ENCODE measurements at regions of chr9 and their contacts with region 1.

Region 1: GRCh38 chr9:127166651-127167524 is 44.5 kb upstream of the ANGPTL2 start:
- DNase-seq: peak; percentile 81
- ATAC-seq: peak; percentile 97
- H3K4me3 Mint-ChIP-seq: peak overlapping the region; percentile 12
- H3K27ac Mint-ChIP-seq: peak overlapping the region; percentile 85
- H3K4me1 Mint-ChIP-seq: peaks cover 51% of the 10 kb centered on the region
- H3K27me3 Mint-ChIP-seq: no peaks in the 10 kb centered on the region
- CTCF ChIP-seq: no peak

Region 2: GRCh38 chr9:126722252-126723078 is 444.4 kb before region 1 on chr9:
- CTCF ChIA-PET with region 1: no interaction called
- POLR2A ChIA-PET with region 1: no interaction called
- intact Hi-C with region 1: loop called (anchors 5 kb)
- DNase-seq: peak; percentile 92
- ATAC-seq: peak; percentile 75
- H3K4me3 Mint-ChIP-seq: peak overlapping the region; percentile 90
- H3K27ac Mint-ChIP-seq: peak overlapping the region; percentile 96
- H3K4me1 Mint-ChIP-seq: peaks cover 47% of the 10 kb centered on the region
- H3K27me3 Mint-ChIP-seq: no peaks in the 10 kb centered on the region
- CTCF ChIP-seq: no peak

Region 3: DNA sequence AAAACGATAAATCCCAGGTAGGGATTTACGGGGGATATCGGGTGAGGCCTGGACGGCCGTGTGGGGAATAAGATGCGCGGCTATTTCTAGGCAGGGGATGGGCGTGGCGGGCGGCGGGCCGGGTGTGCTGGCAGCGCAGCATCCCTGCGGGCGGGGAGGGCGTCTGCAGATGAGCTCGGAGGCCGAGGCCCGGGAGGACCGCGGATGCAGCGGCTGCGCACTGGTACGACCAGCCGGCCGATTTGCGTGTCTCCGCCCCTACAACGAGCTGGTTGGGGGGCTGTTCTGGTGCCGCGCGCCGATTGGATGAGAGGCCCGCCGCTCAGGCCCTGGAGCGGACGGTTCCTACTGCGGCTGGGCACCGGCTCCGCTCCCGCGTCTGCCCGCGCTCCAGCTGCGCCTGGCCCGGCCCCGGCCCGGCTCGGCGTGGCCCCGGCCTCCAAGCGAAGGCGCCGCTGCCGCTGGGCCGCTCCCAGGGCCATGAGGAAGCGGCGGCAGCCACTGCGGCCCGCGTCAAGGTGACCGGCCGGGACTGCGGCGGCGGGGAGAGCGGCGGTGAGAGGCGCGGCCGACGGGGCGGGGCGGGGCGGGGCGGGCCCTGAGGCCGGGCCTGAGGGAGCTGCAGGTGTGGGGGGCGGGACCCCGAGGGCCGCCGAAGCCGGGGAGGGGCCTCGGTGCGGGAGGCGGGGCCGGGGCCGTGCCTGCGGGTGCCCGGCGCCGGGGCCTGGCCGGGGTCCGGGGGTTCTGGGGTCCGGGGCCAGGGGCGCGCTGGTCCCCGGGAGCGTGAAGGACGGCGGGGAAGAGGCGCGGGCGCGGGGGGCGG is 252.2 kb before region 1 on chr9 and contains the start of gene RALGPS1:
- CTCF ChIA-PET with region 1: no interaction called
- POLR2A ChIA-PET with region 1: interaction called, 4 read pairs
- intact Hi-C with region 1: loop called (anchors 1 kb)
- DNase-seq: peak; percentile 94
- ATAC-seq: peak; percentile 96
- H3K4me3 Mint-ChIP-seq: peak within 1 kb of the TSS; percentile 81
- H3K27ac Mint-ChIP-seq: peak within 1 kb of the TSS; percentile 56
- H3K4me1 Mint-ChIP-seq: peaks cover 10% of the 10 kb centered on the region
- H3K27me3 Mint-ChIP-seq: peaks cover 6% of the 10 kb centered on the region
- CTCF ChIP-seq: no peak
- total RNA-seq, gene RALGPS1: 14.7 and 21.7 TPM in 2 replicates

Region 4: GRCh38 chr9:127122176-127123063 is 44.5 kb before region 1 on chr9 and contains the start of gene ANGPTL2:
- CTCF ChIA-PET with region 1: no interaction called
- POLR2A ChIA-PET with region 1: interaction called, 3 read pairs
- intact Hi-C with region 1: loop called (anchors 2 kb)
- DNase-seq: peak; percentile 29
- ATAC-seq: peak; percentile 80
- H3K4me3 Mint-ChIP-seq: peak within 1 kb of the TSS; percentile 19
- H3K27ac Mint-ChIP-seq: no peak within 1 kb of the TSS
- H3K4me1 Mint-ChIP-seq: peaks cover 29% of the 10 kb centered on the region
- H3K27me3 Mint-ChIP-seq: peaks cover 5% of the 10 kb centered on the region
- CTCF ChIP-seq: no peak
- total RNA-seq, gene ANGPTL2: not detected in 2 replicates